CD8-positive, alpha-beta memory T cell (primary cell): ENCODE measurements at regions of chr20 and their contacts with region 1.

Region 1: GRCh38 chr20:41173161-41173721 is 35.9 kb downstream of the PLCG1 start:
- DNase-seq: peak; percentile 43 to 69 (median 49)
- H3K4me3 ChIP-seq: no peak overlapping the region
- H3K4me3 Mint-ChIP-seq: no peak overlapping the region
- H3K27ac ChIP-seq: no peak overlapping the region
- H3K27ac Mint-ChIP-seq: peak overlapping the region; percentile 57 to 98 (median 82)
- H3K4me1 ChIP-seq: no peaks in the 10 kb centered on the region
- H3K4me1 Mint-ChIP-seq: peaks cover 25 to 32% (median 28%) of the 10 kb centered on the region in 3 donors
- H3K27me3 ChIP-seq: no peaks in the 10 kb centered on the region
- H3K27me3 Mint-ChIP-seq: no peaks in the 10 kb centered on the region

Region 2: GRCh38 chr20:41142919-41143318 is 30.3 kb before region 1 on chr20:
- CTCF ChIA-PET with region 1: interaction called, 23 read pairs
- POLR2A ChIA-PET with region 1: interaction called, 5 read pairs
- DNase-seq: peak; percentile 44 to 68 (median 46)
- H3K4me3 ChIP-seq: peak overlapping the region; percentile 85
- H3K4me3 Mint-ChIP-seq: peak overlapping the region; percentile 89 to 98 (median 94)
- H3K27ac ChIP-seq: peak overlapping the region; percentile 3
- H3K27ac Mint-ChIP-seq: peak overlapping the region; percentile 80 to 99 (median 94)
- H3K4me1 ChIP-seq: peaks cover 93% of the 10 kb centered on the region
- H3K4me1 Mint-ChIP-seq: peaks cover 92 to 94% (median 94%) of the 10 kb centered on the region in 3 donors
- H3K27me3 ChIP-seq: no peaks in the 10 kb centered on the region
- H3K27me3 Mint-ChIP-seq: peaks cover 0 to 2% of the 10 kb centered on the region in 2 donors

Region 3: DNA sequence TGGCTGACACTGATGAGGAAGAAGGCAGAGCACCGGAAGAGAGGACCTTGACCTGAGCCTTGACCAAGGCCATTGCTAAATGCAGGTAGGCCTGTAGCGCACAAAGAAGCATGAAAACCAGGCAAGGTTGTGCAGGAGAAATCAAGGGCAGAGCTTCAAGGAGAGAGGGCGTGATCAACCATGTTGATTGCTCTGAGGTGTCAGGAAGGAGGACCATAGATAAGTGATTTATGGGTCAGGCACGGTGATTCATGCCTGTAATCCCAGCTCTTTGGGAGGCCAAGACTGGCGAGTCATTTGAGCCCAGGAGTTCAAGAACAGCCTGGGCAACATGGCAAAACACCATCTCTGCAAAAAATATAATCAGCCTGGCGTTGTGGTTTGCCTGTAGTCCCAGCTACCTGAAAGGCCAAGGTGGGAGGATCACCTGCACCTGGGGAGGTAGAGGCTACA is 23.5 kb before region 1 on chr20:
- CTCF ChIA-PET with region 1: interaction called, 49 read pairs
- POLR2A ChIA-PET with region 1: no interaction called
- DNase-seq: no peak
- H3K4me3 ChIP-seq: no peak overlapping the region
- H3K4me3 Mint-ChIP-seq: peak overlapping the region in 6 of 7 donors; percentile 1 to 94 (median 65)
- H3K27ac ChIP-seq: no peak overlapping the region
- H3K27ac Mint-ChIP-seq: peak overlapping the region; percentile 44 to 99 (median 92)
- H3K4me1 ChIP-seq: peaks cover 100% of the 10 kb centered on the region
- H3K4me1 Mint-ChIP-seq: peaks cover 92 to 99% (median 97%) of the 10 kb centered on the region in 3 donors
- H3K27me3 ChIP-seq: no peaks in the 10 kb centered on the region
- H3K27me3 Mint-ChIP-seq: peaks cover 0 to 1% of the 10 kb centered on the region in 2 donors

Region 4: GRCh38 chr20:41158082-41158645 is 15.1 kb before region 1 on chr20:
- CTCF ChIA-PET with region 1: interaction called, 49 read pairs
- POLR2A ChIA-PET with region 1: interaction called, 8 read pairs
- DNase-seq: no peak
- H3K4me3 ChIP-seq: peak overlapping the region; percentile 44
- H3K4me3 Mint-ChIP-seq: peak overlapping the region; percentile 69 to 91 (median 79)
- H3K27ac ChIP-seq: peak overlapping the region; percentile 57
- H3K27ac Mint-ChIP-seq: peak overlapping the region; percentile 93 to 100 (median 98)
- H3K4me1 ChIP-seq: peaks cover 99% of the 10 kb centered on the region
- H3K4me1 Mint-ChIP-seq: peaks cover 90 to 100% (median 90%) of the 10 kb centered on the region in 3 donors
- H3K27me3 ChIP-seq: no peaks in the 10 kb centered on the region
- H3K27me3 Mint-ChIP-seq: peaks cover 0 to 5% of the 10 kb centered on the region in 2 donors

Region 5: DNA sequence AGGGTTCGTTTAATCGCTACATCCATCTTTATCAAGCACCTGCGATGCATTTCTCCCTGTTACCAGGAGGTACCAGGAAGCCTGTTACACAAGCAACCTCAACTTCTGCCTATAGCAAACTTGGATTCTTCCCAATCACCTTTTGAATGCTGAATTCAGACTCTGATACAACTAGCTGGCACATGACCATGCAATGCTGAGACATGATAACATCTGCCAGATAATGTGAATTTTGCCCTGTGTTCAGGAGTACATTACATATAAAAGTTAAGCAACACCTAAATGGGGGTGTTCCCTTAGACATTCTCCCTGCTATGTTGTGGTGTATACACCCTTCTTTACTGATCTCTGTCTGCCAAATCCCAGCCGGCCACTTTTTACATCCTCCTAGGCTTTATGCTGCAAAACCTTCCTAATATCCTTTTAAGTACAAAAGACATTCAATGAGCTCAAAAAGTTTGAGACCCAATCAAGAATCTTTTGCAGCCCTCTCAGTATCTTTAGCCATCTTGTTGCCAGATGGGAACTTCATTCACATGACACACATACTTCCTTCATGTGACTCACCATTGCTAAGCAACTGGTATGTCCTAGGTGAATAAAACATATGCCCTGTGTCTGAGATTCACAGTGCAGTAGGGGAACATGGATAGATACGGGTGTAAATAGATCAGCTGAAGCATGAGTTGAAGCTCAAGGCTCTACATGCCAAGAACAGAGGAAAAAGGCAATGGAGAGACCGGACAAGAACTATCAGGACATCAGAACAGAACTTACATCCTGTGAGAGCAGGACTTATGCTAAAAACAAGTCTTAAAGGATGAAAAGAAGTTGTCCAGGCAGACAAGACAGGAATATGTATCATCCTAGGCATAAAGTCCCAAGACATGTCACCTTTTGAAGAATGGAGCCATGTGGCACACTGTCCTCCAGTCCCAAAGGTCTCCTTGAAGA is 60.0 kb after region 1 on chr20:
- CTCF ChIA-PET with region 1: interaction called, 31 read pairs
- POLR2A ChIA-PET with region 1: no interaction called
- DNase-seq: no peak
- H3K4me3 ChIP-seq: no peak overlapping the region
- H3K4me3 Mint-ChIP-seq: no peak overlapping the region
- H3K27ac ChIP-seq: no peak overlapping the region
- H3K27ac Mint-ChIP-seq: peak overlapping the region in 2 of 8 donors; percentile 5 to 29
- H3K4me1 ChIP-seq: peaks cover 7% of the 10 kb centered on the region
- H3K4me1 Mint-ChIP-seq: peaks cover 16 to 22% (median 18%) of the 10 kb centered on the region in 3 donors
- H3K27me3 ChIP-seq: no peaks in the 10 kb centered on the region
- H3K27me3 Mint-ChIP-seq: no peaks in the 10 kb centered on the region

Region 6: GRCh38 chr20:41339507-41340326 is 166.5 kb after region 1 on chr20:
- CTCF ChIA-PET with region 1: interaction called, 12 read pairs
- POLR2A ChIA-PET with region 1: interaction called, 3 read pairs
- DNase-seq: peak; percentile 74 to 86 (median 80)
- H3K4me3 ChIP-seq: peak overlapping the region; percentile 60
- H3K4me3 Mint-ChIP-seq: peak overlapping the region; percentile 14 to 88 (median 83)
- H3K27ac ChIP-seq: no peak overlapping the region
- H3K27ac Mint-ChIP-seq: peak overlapping the region in 4 of 8 donors; percentile 14 to 77 (median 36)
- H3K4me1 ChIP-seq: peaks cover 7% of the 10 kb centered on the region
- H3K4me1 Mint-ChIP-seq: peaks cover 9 to 11% (median 10%) of the 10 kb centered on the region in 3 donors
- H3K27me3 ChIP-seq: no peaks in the 10 kb centered on the region
- H3K27me3 Mint-ChIP-seq: peaks cover 8 to 19% of the 10 kb centered on the region in 2 donors